CD8-positive, alpha-beta memory T cell (primary cell): ENCODE measurements at regions of chr2 and their contacts with region 1.

Region 1: GRCh38 chr2:219218732-219219701 is at the start of gene ABCB6:
- DNase-seq: peak; percentile 70 to 87 (median 83)
- H3K4me3 ChIP-seq: peak within 1 kb of the TSS; percentile 72
- H3K4me3 Mint-ChIP-seq: peak within 1 kb of the TSS; percentile 66 to 91 (median 83)
- H3K27ac ChIP-seq: peak within 1 kb of the TSS; percentile 68
- H3K27ac Mint-ChIP-seq: peak within 1 kb of the TSS; percentile 36 to 88 (median 79)
- H3K4me1 ChIP-seq: peaks cover 18% of the 10 kb centered on the region
- H3K4me1 Mint-ChIP-seq: peaks cover 18 to 26% (median 18%) of the 10 kb centered on the region in 3 donors
- H3K27me3 ChIP-seq: no peaks in the 10 kb centered on the region
- H3K27me3 Mint-ChIP-seq: peaks cover 0 to 2% of the 10 kb centered on the region in 2 donors
- total RNA-seq, gene ABCB6: 22.1 to 22.8 TPM

Region 2: GRCh38 chr2:219057709-219058540 is 161.1 kb before region 1 on chr2:
- CTCF ChIA-PET with region 1: no interaction called
- POLR2A ChIA-PET with region 1: no interaction called
- DNase-seq: peak; percentile 66 to 81 (median 68)
- H3K4me3 ChIP-seq: no peak overlapping the region
- H3K4me3 Mint-ChIP-seq: peak overlapping the region; percentile 11 to 84 (median 65)
- H3K27ac ChIP-seq: no peak overlapping the region
- H3K27ac Mint-ChIP-seq: peak overlapping the region in 3 of 8 donors; percentile 47 to 70 (median 55)
- H3K4me1 ChIP-seq: peaks cover 21% of the 10 kb centered on the region
- H3K4me1 Mint-ChIP-seq: peaks cover 12 to 30% (median 23%) of the 10 kb centered on the region in 3 donors
- H3K27me3 ChIP-seq: peaks cover 40% of the 10 kb centered on the region
- H3K27me3 Mint-ChIP-seq: peaks cover 56 to 67% of the 10 kb centered on the region in 2 donors

Region 3: GRCh38 chr2:219087361-219087760 is 131.7 kb before region 1 on chr2:
- CTCF ChIA-PET with region 1: no interaction called
- POLR2A ChIA-PET with region 1: no interaction called
- DNase-seq: no peak
- H3K4me3 ChIP-seq: no peak overlapping the region
- H3K4me3 Mint-ChIP-seq: no peak overlapping the region
- H3K27ac ChIP-seq: no peak overlapping the region
- H3K27ac Mint-ChIP-seq: no peak overlapping the region
- H3K4me1 ChIP-seq: no peaks in the 10 kb centered on the region
- H3K4me1 Mint-ChIP-seq: peaks cover 10 to 13% (median 12%) of the 10 kb centered on the region in 3 donors
- H3K27me3 ChIP-seq: no peaks in the 10 kb centered on the region
- H3K27me3 Mint-ChIP-seq: no peaks in the 10 kb centered on the region

Region 4: DNA sequence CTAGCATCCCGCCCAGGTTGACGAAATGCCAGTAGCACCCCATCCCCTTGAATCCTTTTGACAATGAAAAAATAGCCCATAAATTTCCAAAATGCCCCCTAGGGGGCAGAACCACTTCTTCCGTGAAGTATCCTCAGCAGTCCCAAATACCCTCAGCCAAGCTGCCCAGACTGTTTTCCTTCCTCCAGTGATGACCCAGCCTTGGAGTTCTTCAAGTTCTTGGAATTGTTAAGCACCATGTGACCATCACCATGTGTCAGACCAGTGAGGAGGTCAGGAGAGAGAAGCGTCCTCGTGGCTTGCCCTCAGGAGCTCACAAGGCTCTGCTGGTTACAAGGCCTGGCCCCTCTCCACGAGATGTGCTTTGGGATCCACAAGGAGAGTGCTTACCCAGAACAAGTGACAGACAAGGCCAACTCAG is 47.8 kb before region 1 on chr2:
- CTCF ChIA-PET with region 1: interaction called, 22 read pairs
- POLR2A ChIA-PET with region 1: interaction called, 3 read pairs
- DNase-seq: peak in 4 of 5 donors; percentile 12 to 50 (median 42)
- H3K4me3 ChIP-seq: no peak overlapping the region
- H3K4me3 Mint-ChIP-seq: peak overlapping the region in 1 of 7 donors; percentile 65
- H3K27ac ChIP-seq: no peak overlapping the region
- H3K27ac Mint-ChIP-seq: peak overlapping the region in 6 of 8 donors; percentile 43 to 84 (median 72)
- H3K4me1 ChIP-seq: peaks cover 21% of the 10 kb centered on the region
- H3K4me1 Mint-ChIP-seq: peaks cover 30 to 54% (median 45%) of the 10 kb centered on the region in 3 donors
- H3K27me3 ChIP-seq: no peaks in the 10 kb centered on the region
- H3K27me3 Mint-ChIP-seq: peaks cover 0 to 2% of the 10 kb centered on the region in 2 donors

Region 5: GRCh38 chr2:219245148-219245898 is 26.3 kb after region 1 on chr2 and contains the starts of genes GLB1L and STK16:
- CTCF ChIA-PET with region 1: interaction called, 5 read pairs
- POLR2A ChIA-PET with region 1: interaction called, 11 read pairs
- DNase-seq: peak; percentile 79 to 93 (median 83)
- H3K4me3 ChIP-seq: peak within 1 kb of the TSS; percentile 86
- H3K4me3 Mint-ChIP-seq: peak within 1 kb of the TSS; percentile 84 to 99 (median 91)
- H3K27ac ChIP-seq: peak within 1 kb of the TSS; percentile 93
- H3K27ac Mint-ChIP-seq: peak within 1 kb of the TSS; percentile 91 to 98 (median 98)
- H3K4me1 ChIP-seq: peaks cover 56% of the 10 kb centered on the region
- H3K4me1 Mint-ChIP-seq: peaks cover 54 to 66% (median 55%) of the 10 kb centered on the region in 3 donors
- H3K27me3 ChIP-seq: no peaks in the 10 kb centered on the region
- H3K27me3 Mint-ChIP-seq: peaks cover 0 to 6% of the 10 kb centered on the region in 2 donors
- total RNA-seq, gene GLB1L: 2.6 to 3.5 TPM
- total RNA-seq, gene STK16: 23.0 to 26.1 TPM

Region 6: DNA sequence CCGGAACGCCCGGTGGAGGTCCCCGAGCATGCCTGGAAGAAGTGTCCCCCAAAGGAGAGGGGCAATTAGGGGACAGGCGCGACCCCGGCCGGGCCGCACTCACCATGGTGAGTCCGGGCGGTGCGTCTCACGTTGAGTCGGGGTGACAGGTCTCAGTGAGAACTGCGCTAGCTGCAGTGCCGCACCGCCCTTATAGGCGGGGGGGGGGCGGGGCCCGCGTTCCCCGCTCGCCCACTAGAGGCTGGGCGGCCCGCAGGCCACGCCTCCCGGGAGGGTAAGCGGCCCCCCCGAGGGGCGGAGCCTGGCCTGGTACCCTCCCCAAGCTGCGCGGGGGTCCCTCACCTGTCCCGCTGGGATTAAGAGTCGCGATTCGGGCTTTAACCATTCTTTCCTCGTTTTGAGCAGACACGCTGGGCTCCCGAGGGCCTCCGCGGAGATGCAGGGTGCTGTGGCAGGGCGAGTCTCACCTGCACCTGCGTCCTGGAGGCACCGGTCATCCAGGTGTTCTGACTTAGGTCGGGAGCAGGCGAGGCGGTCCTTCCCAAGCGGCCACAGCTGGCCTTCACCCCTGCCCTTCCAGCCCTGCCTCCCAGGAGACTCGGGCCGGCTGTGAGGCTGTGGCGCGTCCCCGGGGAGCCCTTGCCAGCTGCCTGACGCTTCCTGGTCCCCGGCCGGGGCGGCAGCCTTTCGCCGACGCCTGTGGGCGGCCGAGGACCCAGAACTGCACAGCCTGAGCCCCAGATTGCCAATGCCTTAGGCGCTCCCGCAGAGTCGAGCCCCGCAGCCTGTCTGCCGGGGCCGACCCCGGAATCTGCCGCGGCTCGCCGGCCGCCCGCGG is 35.0 kb after region 1 on chr2 and contains the start of gene TUBA4A:
- CTCF ChIA-PET with region 1: interaction called, 51 read pairs
- POLR2A ChIA-PET with region 1: interaction called, 24 read pairs
- DNase-seq: peak; percentile 88 to 95 (median 90)
- H3K4me3 ChIP-seq: peak within 1 kb of the TSS; percentile 99
- H3K4me3 Mint-ChIP-seq: peak within 1 kb of the TSS; percentile 84 to 99 (median 89)
- H3K27ac ChIP-seq: peak within 1 kb of the TSS; percentile 95
- H3K27ac Mint-ChIP-seq: peak within 1 kb of the TSS; percentile 91 to 100 (median 96)
- H3K4me1 ChIP-seq: peaks cover 37% of the 10 kb centered on the region
- H3K4me1 Mint-ChIP-seq: peaks cover 45 to 50% (median 45%) of the 10 kb centered on the region in 3 donors
- H3K27me3 ChIP-seq: no peaks in the 10 kb centered on the region
- H3K27me3 Mint-ChIP-seq: no peaks in the 10 kb centered on the region
- total RNA-seq, gene TUBA4A: 175 to 178 TPM

Region 7: DNA sequence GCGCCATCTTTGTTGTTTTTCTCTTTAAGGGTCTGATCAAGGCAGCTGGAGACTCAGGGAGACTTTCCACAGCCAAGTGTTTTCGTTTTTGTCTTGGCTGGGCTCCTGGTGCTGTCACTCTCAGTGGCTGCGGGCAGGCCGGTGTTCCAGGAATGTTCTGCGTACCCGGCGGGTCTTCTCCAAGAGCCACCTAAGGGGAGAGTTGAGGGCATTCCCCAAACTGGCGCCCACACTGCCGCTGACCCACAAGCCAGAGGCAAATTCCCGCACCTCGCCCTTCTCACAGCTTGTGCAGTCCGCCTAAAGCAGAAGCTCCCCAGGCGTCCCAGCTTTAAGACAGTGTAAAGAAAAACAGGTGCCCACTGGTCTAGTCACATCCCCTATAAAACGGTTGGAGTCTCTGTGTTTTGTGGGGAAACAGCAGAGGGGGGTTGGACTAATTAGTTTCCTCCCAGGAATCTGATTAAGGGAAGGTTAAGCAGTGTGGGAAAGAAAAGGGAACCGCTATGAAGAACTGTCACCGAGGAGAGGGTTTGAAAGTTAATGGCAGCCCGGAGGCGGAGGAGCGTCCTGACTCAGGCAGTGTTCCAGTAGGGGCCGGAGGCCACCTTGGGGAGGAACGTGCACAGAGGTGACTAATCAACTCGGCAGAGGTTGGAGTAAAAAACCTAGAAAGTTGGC is 632.9 kb after region 1 on chr2:
- CTCF ChIA-PET with region 1: no interaction called
- POLR2A ChIA-PET with region 1: no interaction called
- DNase-seq: no peak
- H3K4me3 ChIP-seq: no peak overlapping the region
- H3K4me3 Mint-ChIP-seq: no peak overlapping the region
- H3K27ac ChIP-seq: no peak overlapping the region
- H3K27ac Mint-ChIP-seq: peak overlapping the region in 1 of 8 donors; percentile 63
- H3K4me1 ChIP-seq: no peaks in the 10 kb centered on the region
- H3K4me1 Mint-ChIP-seq: no peaks in the 10 kb centered on the region
- H3K27me3 ChIP-seq: no peaks in the 10 kb centered on the region
- H3K27me3 Mint-ChIP-seq: peaks cover 4 to 7% of the 10 kb centered on the region in 2 donors

Region 8: GRCh38 chr2:219870041-219870440 is 651.0 kb after region 1 on chr2:
- CTCF ChIA-PET with region 1: no interaction called
- POLR2A ChIA-PET with region 1: no interaction called
- DNase-seq: no peak
- H3K4me3 ChIP-seq: no peak overlapping the region
- H3K4me3 Mint-ChIP-seq: no peak overlapping the region
- H3K27ac ChIP-seq: no peak overlapping the region
- H3K27ac Mint-ChIP-seq: no peak overlapping the region
- H3K4me1 ChIP-seq: no peaks in the 10 kb centered on the region
- H3K4me1 Mint-ChIP-seq: no peaks in the 10 kb centered on the region
- H3K27me3 ChIP-seq: no peaks in the 10 kb centered on the region
- H3K27me3 Mint-ChIP-seq: peaks cover 0 to 2% of the 10 kb centered on the region in 2 donors